Sciatic nerve (tissue), 2 donors: ENCODE measurements at regions of chr10 and their contacts with region 1.

Region 1: DNA sequence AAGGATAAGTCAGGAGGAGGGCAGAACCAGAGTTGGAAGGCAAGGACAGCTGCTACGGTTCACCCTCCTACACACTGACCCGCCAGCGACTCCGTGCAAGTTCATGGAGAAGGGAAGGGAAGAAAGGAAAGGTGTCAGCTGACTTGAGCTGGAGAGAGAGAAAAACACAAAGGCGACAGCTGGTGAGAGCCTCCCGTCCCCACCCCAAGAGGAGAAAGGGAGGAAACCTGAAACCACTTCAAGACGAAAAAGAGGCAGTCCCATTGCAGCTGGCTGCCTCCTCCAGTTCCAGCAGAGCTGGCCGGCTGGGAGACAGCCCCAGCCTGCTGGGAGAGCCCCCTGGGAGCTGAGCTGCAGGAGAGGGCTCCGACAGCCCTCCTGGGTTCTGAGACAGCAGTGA is 75.2 kb downstream of the PARD3 start:
- DNase-seq: no peak
- ATAC-seq: peak; percentile 92

Region 2: DNA sequence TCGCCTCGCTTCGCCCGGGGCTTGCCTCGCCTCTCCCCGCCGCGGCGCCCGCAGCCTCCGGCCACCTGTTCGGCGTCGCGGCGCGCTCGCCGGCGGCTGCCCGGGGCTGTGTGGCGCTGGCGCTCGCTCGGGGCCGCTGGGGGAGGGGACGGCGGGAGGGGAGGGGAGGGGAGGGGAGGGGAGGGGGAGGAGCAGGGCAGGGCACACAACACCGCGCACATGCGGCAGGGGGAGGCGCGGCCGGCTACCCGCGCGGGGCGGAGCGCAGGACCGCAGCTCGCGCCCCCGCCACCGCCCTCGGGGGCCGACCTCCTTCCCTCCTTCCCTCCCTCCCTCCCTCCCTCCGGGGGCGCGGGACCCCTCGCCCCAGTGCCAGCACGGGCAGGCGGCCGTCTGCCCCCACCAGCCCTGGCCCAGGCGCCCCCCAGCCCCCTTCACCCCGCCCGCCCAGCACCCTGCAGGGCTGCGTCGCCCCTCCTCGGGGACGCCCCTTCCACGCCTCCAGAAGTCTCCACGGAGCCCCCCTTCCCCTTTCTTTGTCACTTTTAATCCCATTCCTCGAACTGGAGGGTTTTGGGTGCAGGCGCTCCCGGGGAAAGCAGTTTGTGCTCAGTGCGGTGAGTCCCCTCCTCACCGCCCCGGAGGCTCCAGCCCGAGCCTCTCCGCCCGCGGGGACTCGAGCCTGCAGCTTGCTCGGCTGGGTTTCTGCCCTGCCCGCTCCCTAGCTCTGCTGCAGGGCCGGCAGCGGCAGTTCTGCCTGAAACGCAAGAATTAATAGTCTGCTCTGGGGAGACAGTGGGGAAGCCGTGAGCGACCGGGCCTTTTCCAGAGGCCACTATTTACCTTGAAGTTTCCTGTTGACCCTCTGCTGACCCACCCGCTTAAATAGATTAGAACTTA is 75.5 kb after region 1 on chr10 and contains the start of gene PARD3:
- intact Hi-C with region 1: loop called (anchors 10 kb)
- DNase-seq: peak; percentile 73
- ATAC-seq: peak; percentile 70
- total RNA-seq, gene PARD3: 46.1 TPM